ENCODE measurements at regions of chr20 and their contacts with region 1.

Region 1: DNA sequence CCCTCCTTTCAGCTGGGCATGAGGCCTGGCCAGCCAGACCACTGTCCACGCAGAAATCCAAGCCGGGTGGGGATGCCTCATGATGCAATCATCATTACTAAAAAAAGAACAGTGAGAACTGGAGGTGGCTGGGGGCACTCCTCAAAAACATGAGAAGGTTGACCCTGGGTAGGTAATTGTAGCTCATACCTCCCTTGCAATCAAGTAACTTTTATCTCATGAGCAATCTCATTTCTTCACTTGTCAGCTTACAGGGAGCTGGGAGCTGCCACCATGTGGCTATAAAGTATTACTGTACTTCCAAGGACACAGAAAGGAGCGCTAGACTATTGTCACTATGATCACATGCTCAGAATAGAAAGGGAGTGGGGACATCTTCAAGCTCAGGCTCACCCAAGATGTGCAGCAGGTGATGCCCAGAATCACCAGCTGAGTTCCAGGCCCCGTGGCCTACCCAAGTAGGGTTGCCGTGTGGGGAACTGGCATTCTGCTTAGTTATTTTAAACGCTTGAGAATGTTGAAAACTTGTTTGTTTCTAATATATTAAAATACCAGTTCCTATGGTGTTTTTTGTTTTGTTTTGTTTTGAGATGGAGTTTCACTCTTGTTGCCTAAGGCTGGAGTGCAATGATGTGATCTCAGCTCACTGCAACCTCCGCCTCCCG is 3.0 kb upstream of the CDH26 start:
- DNase-seq: no peak
- H3K4me3 ChIP-seq: no peak overlapping the region
- H3K27ac ChIP-seq: no peak overlapping the region
- H3K4me1 ChIP-seq: peaks cover 4% of the 10 kb centered on the region
- H3K27me3 ChIP-seq: no peaks in the 10 kb centered on the region
- CTCF ChIP-seq: peak; percentile 30 to 42

Region 2: GRCh38 chr20:60143261-60143849 is 188.1 kb after region 1 on chr20:
- CTCF ChIA-PET with region 1: no interaction called
- dilution Hi-C with region 1: no loop called
- in situ Hi-C with region 1: no loop called
- intact Hi-C with region 1: no loop called
- DNase-seq: no peak
- H3K4me3 ChIP-seq: no peak overlapping the region
- H3K27ac ChIP-seq: no peak overlapping the region
- H3K4me1 ChIP-seq: no peaks in the 10 kb centered on the region
- H3K27me3 ChIP-seq: no peaks in the 10 kb centered on the region
- CTCF ChIP-seq: no peak

Region 3: GRCh38 chr20:60365056-60365666 is 409.9 kb after region 1 on chr20:
- CTCF ChIA-PET with region 1: no interaction called
- dilution Hi-C with region 1: no loop called
- in situ Hi-C with region 1: no loop called
- intact Hi-C with region 1: loop called (anchors 5 kb)
- DNase-seq: no peak
- H3K4me3 ChIP-seq: no peak overlapping the region
- H3K27ac ChIP-seq: no peak overlapping the region
- H3K4me1 ChIP-seq: no peaks in the 10 kb centered on the region
- H3K27me3 ChIP-seq: no peaks in the 10 kb centered on the region
- CTCF ChIP-seq: peak; percentile 30 to 40

Measured in mammary epithelial cell (primary cell).